ENCODE measurements at regions of chr7 and their contacts with region 1.

Region 1: GRCh38 chr7:130069978-130070860 is at the start of gene KLHDC10:
- DNase-seq: peak; percentile 93
- H3K4me3 Mint-ChIP-seq: peak within 1 kb of the TSS; percentile 93
- H3K27ac Mint-ChIP-seq: peak within 1 kb of the TSS; percentile 91
- H3K4me1 Mint-ChIP-seq: peaks cover 39% of the 10 kb centered on the region
- H3K27me3 Mint-ChIP-seq: no peaks in the 10 kb centered on the region
- total RNA-seq, gene KLHDC10: 13.2 and 15.6 TPM in 2 replicates

Region 2: DNA sequence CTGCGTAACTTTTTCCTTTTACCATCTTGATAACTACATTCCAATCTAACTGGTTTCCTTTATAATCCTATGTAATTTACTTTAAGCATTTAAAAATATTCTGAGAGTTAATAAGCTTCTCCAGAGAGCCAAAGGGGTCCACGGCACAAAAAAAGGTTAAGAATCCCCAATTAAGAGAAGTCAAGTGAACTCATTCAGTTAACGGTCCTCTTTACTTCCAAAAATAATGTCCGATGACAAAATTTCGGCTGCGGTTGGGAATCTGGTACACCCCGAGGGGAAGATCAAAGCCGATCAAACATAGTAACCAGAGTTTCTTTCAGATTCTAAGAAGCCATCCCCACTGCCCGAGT is 19.5 kb before region 1 on chr7:
- intact Hi-C with region 1: loop called (anchors 1 kb)
- DNase-seq: no peak
- H3K4me3 Mint-ChIP-seq: peak overlapping the region; percentile 99
- H3K27ac Mint-ChIP-seq: peak overlapping the region; percentile 97
- H3K4me1 Mint-ChIP-seq: peaks cover 13% of the 10 kb centered on the region
- H3K27me3 Mint-ChIP-seq: peaks cover 3% of the 10 kb centered on the region

Region 3: GRCh38 chr7:130205084-130205947 is 135.1 kb after region 1 on chr7 and contains the start of gene TMEM209:
- intact Hi-C with region 1: loop called (anchors 1 kb)
- DNase-seq: peak; percentile 93
- H3K4me3 Mint-ChIP-seq: peak within 1 kb of the TSS; percentile 95
- H3K27ac Mint-ChIP-seq: peak within 1 kb of the TSS; percentile 97
- H3K4me1 Mint-ChIP-seq: peaks cover 32% of the 10 kb centered on the region
- H3K27me3 Mint-ChIP-seq: no peaks in the 10 kb centered on the region
- total RNA-seq, gene TMEM209: 47.4 and 55.0 TPM in 2 replicates

Region 4: DNA sequence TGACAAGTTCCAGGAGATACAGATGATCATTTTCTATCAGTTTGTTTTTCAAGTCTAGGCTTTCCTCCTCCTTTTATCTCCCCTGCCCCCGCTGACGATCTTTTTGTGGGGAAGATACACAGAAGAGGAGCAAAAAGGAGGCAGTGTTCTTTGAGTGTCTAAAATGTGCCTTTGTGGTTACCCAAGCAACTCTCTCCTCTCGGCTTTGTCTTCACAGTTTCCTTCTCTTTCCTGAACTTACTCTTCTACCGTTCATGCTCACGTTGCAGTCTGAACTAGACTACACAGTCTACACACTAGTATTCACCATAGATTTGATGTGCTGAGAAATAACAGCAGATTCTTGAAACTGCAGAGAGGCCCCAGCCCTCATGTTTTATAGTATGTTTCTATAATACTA is 347.0 kb after region 1 on chr7:
- intact Hi-C with region 1: loop called (anchors 1 kb)
- DNase-seq: no peak
- H3K4me3 Mint-ChIP-seq: peak overlapping the region; percentile 1
- H3K27ac Mint-ChIP-seq: peak overlapping the region; percentile 24
- H3K4me1 Mint-ChIP-seq: peaks cover 52% of the 10 kb centered on the region
- H3K27me3 Mint-ChIP-seq: no peaks in the 10 kb centered on the region

Region 5: GRCh38 chr7:130486114-130486958 is 416.1 kb after region 1 on chr7:
- intact Hi-C with region 1: loop called (anchors 2 kb)
- DNase-seq: no peak
- H3K4me3 Mint-ChIP-seq: peak overlapping the region; percentile 78
- H3K27ac Mint-ChIP-seq: no peak overlapping the region
- H3K4me1 Mint-ChIP-seq: peaks cover 21% of the 10 kb centered on the region
- H3K27me3 Mint-ChIP-seq: peaks cover 41% of the 10 kb centered on the region

Region 6: DNA sequence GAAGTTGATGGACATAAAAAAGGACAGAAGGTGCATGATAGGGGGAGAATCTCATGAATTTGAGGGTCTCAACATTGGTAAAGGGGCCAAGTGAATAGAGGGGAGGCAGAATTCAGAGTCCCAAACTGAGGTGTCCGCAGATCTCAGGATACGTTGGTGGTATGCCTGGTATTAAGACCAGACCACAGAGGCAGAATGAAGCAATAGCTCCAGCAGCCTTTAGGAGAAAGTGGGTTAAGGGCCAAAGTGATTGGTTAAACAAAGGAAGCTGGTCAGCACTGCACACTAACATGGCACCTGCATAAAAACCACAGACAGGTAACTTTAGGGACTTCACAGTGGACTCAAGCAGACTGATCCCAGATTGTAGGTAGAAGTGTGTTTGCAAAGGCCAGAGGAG is 459.2 kb after region 1 on chr7:
- intact Hi-C with region 1: no loop called
- DNase-seq: no peak
- H3K4me3 Mint-ChIP-seq: no peak overlapping the region
- H3K27ac Mint-ChIP-seq: no peak overlapping the region
- H3K4me1 Mint-ChIP-seq: no peaks in the 10 kb centered on the region
- H3K27me3 Mint-ChIP-seq: no peaks in the 10 kb centered on the region

Region 7: GRCh38 chr7:130668257-130669084 is 598.3 kb after region 1 on chr7 and contains the start of gene COPG2:
- intact Hi-C with region 1: loop called (anchors 1 kb)
- DNase-seq: peak; percentile 76
- H3K4me3 Mint-ChIP-seq: peak within 1 kb of the TSS; percentile 88
- H3K27ac Mint-ChIP-seq: peak within 1 kb of the TSS; percentile 41
- H3K4me1 Mint-ChIP-seq: peaks cover 22% of the 10 kb centered on the region
- H3K27me3 Mint-ChIP-seq: no peaks in the 10 kb centered on the region
- total RNA-seq, gene COPG2: 19.3 and 20.9 TPM in 2 replicates

Region 8: DNA sequence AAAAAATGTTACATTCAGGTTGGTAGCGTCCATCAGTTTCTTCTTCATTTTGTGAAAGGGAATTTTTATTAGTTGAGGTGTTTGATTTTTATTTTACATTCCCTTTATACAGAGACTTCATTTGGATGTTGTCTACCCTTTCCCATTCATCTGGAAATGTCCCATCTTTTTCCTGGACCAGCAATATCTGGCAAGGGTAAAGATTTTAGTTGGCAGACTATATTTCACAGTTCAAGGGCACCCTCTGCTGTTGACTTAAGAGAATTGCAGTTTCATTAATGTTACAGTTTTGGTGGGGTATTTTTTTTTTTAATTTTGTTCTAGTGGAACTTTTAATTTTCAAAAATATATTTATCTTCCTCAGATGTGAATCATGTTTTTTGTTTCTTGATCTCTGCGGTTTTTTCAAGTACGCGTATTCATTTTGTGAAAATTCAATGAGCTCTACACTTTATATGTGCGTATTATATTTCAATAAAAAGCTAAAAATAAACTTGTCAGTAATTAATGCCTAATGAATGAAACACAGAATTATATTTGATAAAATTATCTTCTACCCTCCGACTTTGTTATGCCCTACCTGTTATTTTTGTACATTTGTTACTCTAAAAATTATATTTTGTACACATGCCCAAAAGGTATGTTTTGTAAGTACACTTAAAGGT is 761.7 kb after region 1 on chr7:
- intact Hi-C with region 1: loop called (anchors 1 kb)
- DNase-seq: no peak
- H3K4me3 Mint-ChIP-seq: no peak overlapping the region
- H3K27ac Mint-ChIP-seq: no peak overlapping the region
- H3K4me1 Mint-ChIP-seq: no peaks in the 10 kb centered on the region
- H3K27me3 Mint-ChIP-seq: peaks cover 11% of the 10 kb centered on the region

Measured in activated T-helper 1 cell treated with anti-CD3 and anti-CD28 coated beads, Interleukin-12 subunit alpha, Interleukin-12 subunit beta, Interleukin-2, Interleukin-4 antibody, amounts not matched to agents 30 ng/mL and 10 ng/mL and 1 ng/mL, durations not matched to agents 14 hours and 24 hours and 36 hours (primary cell).